Naive thymus-derived CD8-positive, alpha-beta T cell (primary cell): ENCODE measurements at regions of chr11 and their contacts with region 1.

Region 1: GRCh38 chr11:44596525-44597276 is 31.2 kb downstream of the CD82 start:
- DNase-seq: peak; percentile 34 to 79 (median 56)
- ATAC-seq: peak; percentile 89 to 91
- H3K4me3 Mint-ChIP-seq: peak overlapping the region; percentile 48 to 83 (median 70)
- H3K27ac Mint-ChIP-seq: peak overlapping the region; percentile 89 to 96 (median 92)
- H3K4me1 Mint-ChIP-seq: peaks cover 20 to 55% (median 41%) of the 10 kb centered on the region in 4 donors
- H3K27me3 Mint-ChIP-seq: no peaks in the 10 kb centered on the region

Region 2: GRCh38 chr11:43614214-43614613 is 982.5 kb before region 1 on chr11:
- POLR2A ChIA-PET with region 1: no interaction called
- DNase-seq: no peak
- ATAC-seq: no peak
- H3K4me3 Mint-ChIP-seq: no peak overlapping the region
- H3K27ac Mint-ChIP-seq: no peak overlapping the region
- H3K4me1 Mint-ChIP-seq: no peaks in the 10 kb centered on the region
- H3K27me3 Mint-ChIP-seq: peaks cover 10 to 29% (median 24%) of the 10 kb centered on the region in 5 donors

Region 3: GRCh38 chr11:44565211-44565952 is 31.3 kb before region 1 on chr11 and contains the start of gene CD82:
- POLR2A ChIA-PET with region 1: interaction called, 21 read pairs
- DNase-seq: peak; percentile 86 to 97 (median 92)
- ATAC-seq: peak; percentile 79 to 80
- H3K4me3 Mint-ChIP-seq: peak within 1 kb of the TSS; percentile 78 to 91 (median 87)
- H3K27ac Mint-ChIP-seq: peak within 1 kb of the TSS; percentile 80 to 91 (median 85)
- H3K4me1 Mint-ChIP-seq: peaks cover 25 to 68% (median 55%) of the 10 kb centered on the region in 4 donors
- H3K27me3 Mint-ChIP-seq: no peaks in the 10 kb centered on the region
- polyA plus RNA-seq, gene CD82: 21.1 to 29.9 (median 21.1) TPM

Region 4: DNA sequence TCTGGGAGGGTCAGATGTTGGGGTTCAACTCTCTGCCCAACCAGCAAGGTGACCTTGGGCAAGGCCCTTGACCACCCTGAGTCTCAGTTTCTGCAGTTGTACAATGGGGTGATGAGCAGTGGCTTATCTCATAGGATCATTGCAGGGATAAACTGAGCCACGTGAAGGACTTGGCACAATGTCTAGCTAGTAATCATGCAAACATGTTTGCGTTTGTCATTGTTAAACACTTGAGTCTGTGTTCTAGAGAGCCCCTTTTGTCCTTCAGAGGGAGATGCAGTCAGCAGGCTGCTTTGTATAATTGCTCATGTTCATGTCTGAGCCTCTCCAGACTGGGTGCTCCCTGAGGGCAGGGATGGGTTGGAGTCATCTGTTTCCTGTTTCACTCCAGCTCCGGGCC is 15.5 kb before region 1 on chr11:
- POLR2A ChIA-PET with region 1: no interaction called
- DNase-seq: no peak
- ATAC-seq: no peak
- H3K4me3 Mint-ChIP-seq: no peak overlapping the region
- H3K27ac Mint-ChIP-seq: no peak overlapping the region
- H3K4me1 Mint-ChIP-seq: peaks cover 8 to 32% (median 23%) of the 10 kb centered on the region in 4 donors
- H3K27me3 Mint-ChIP-seq: no peaks in the 10 kb centered on the region